Posterior vena cava (tissue), 2 donors: ENCODE measurements at regions of chr5 and their contacts with region 1.

Region 1: DNA sequence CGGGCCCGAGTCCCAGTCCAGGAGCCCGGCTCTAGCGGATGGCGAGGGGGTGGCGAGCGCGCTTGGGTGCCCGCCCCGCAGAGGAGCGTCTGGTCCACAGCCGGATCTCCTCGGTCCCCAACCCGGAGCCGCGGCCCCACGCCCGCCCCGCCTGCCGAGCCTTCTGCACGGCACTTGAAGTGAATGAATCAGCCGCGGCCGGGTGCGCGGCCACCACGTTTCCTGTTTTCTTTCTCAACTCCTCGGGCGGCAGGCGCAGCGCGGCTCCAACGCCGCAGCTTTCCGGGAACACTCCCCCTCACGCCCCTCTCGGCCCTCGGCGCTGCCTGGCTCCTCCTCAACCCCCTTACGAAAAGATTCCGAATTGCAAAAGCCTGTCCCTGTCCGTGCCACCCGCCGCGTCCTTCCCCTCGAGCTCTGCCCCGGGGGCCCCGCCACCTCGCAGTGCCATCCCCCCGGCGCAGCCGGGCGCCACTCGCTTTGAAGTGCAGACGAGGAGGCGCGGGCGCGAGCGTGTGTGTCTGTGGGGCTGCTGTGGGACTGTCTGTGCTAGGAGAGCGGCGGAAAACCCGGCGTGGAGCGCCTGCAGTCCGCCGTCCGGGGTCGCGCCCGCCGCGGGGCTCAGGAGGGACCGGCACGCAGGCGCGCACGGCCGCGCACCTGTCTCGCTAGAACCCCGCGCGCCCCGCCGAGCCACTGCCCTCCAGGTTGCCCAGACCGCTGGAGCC is 456.6 kb downstream of the RAB3C start:
- DNase-seq: peak; percentile 97

Region 2: GRCh38 chr5:58366461-58366860 is 673.0 kb before region 1 on chr5:
- intact Hi-C with region 1: no loop called
- DNase-seq: no peak

Region 3: GRCh38 chr5:58999804-59000595 is 39.5 kb before region 1 on chr5:
- intact Hi-C with region 1: no loop called
- DNase-seq: no peak

Region 4: GRCh38 chr5:59097116-59097515 is 57.7 kb after region 1 on chr5:
- intact Hi-C with region 1: loop called in 1 of 2 experiments (anchors 2 kb)
- DNase-seq: no peak

Region 5: GRCh38 chr5:59126708-59127573 is 87.5 kb after region 1 on chr5:
- intact Hi-C with region 1: loop called in 1 of 2 experiments (anchors 10 kb)
- DNase-seq: no peak

Region 6: DNA sequence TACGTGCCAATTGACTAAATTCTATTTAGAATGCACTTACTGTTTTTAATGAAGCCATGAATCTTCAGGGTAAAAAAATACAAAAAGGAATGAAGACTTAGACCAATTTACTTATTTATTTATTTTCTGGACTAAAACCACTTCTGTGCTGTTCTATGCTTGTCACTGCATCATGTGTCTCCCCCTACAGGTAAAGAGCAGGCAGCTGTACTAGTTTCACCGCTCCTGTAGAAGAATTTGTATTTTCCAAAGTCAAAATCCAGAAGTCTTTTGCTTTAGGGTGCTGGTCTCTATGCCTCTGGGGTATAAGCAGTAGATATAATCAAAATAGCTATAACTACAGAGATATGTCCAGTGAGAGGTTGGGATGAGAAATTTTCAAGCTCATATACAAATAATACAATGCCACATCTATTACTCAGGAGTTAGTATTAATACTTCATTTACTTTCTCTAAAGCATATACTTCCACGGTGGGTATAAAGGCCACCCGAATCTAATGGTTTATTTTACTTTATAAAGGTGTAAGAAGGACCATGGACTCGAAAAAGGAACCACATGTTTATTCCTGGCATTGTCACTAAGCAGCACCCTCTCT is 134.9 kb after region 1 on chr5:
- intact Hi-C with region 1: loop called in 1 of 2 experiments (anchors 10 kb)
- DNase-seq: no peak

Region 7: GRCh38 chr5:60404171-60404570 is 1364.7 kb after region 1 on chr5:
- intact Hi-C with region 1: loop called in 1 of 2 experiments (anchors 10 kb)
- DNase-seq: no peak